ENCODE measurements at regions of chr12 and their contacts with region 1.

Region 1: DNA sequence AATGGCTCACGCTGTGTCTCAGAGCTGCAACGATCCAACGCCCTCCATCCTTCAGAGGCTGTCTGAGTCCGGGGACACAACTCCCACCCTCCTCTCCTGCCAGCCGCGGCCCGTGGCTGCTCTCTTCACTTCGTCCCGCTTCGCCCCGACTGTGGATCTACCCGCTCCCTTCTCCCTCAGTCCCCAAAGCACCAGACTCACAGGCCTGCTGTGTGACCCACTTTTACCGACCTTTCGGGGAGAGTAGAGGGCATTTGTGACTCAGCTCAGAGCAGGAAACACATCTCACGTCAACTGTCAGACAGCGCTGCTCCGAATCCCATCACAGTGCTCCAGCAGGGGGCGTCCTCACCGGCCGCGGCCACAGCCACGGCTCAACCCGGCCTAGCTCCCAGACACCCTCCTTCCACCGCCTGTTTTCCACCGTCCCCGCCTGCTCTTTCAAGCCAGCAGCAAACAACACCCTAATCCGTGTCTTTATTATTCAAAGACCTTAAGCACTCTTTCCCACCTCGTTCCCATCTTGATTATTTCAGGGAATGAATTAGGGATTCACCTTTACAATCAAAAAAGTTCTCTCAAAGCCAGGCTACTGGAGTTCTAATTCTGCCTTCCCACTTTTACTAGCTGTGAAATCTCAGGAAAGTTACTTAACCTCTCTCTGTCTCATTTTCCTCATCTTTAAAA is 5.0 kb upstream of the AQP2 start:
- DNase-seq: peak; percentile 93
- H3K4me3 Mint-ChIP-seq: peak overlapping the region; percentile 70
- H3K27ac Mint-ChIP-seq: peak overlapping the region; percentile 81
- H3K4me1 Mint-ChIP-seq: peaks cover 33% of the 10 kb centered on the region
- H3K27me3 Mint-ChIP-seq: no peaks in the 10 kb centered on the region

Region 2: DNA sequence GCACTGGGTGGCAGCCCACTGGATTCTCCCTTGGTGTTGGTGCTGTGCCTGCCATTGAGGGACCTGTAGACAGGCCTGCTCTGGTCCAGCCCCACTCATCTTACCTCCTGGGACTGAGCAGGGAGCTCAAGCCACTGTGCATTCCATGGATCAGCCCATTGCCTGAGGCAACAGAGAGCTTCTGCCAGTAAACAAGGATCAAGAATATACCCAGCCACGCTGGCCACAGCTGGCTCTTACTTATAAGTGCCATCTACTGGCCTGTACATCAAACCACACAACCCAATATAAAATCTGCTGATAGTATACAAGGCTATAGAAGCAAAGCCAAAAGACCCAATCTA is 335.8 kb before region 1 on chr12:
- CTCF ChIA-PET with region 1: no interaction called
- POLR2A ChIA-PET with region 1: no interaction called
- intact Hi-C with region 1: no loop called
- DNase-seq: no peak
- H3K4me3 Mint-ChIP-seq: no peak overlapping the region
- H3K27ac Mint-ChIP-seq: no peak overlapping the region
- H3K4me1 Mint-ChIP-seq: no peaks in the 10 kb centered on the region
- H3K27me3 Mint-ChIP-seq: peaks cover 2% of the 10 kb centered on the region

Region 3: DNA sequence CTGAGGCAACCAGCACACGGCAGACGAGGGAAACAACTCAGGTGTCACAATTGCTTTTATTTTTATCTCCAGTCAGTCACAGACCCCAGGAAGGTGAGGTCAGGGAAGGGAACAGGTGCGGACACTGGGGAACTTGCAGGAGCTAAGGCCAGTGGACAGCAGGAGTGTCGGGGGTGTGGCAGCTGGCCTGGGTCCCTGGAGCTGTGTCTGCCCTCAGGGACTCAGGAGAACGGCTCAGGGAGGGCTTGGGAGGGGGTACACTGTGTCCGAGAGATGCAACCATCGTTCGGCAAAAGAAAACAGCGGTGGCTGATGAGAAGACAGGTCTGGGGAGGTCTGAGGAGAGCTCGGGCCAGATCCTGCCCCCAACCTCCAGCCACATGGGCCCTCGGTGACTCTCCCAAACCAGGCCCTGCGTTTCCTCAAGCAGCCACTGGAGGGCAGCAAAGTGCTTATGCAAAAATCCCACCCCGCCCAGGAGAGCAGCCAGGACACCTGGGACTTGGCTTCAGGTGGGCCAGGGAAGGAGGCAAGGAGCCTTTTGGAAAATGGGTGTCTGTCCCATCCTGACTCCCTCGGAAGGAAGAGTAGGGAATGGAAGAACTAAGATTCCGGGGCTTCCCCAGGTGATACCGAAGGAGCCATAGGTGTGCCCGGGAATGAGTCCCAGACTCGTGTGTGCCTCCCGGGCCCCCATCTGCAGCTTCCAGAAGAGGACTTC is 78.5 kb before region 1 on chr12:
- CTCF ChIA-PET with region 1: interaction called, 30 read pairs
- POLR2A ChIA-PET with region 1: no interaction called
- intact Hi-C with region 1: loop called (anchors 5 kb)
- DNase-seq: peak; percentile 83
- H3K4me3 Mint-ChIP-seq: no peak overlapping the region
- H3K27ac Mint-ChIP-seq: no peak overlapping the region
- H3K4me1 Mint-ChIP-seq: no peaks in the 10 kb centered on the region
- H3K27me3 Mint-ChIP-seq: no peaks in the 10 kb centered on the region

Region 4: DNA sequence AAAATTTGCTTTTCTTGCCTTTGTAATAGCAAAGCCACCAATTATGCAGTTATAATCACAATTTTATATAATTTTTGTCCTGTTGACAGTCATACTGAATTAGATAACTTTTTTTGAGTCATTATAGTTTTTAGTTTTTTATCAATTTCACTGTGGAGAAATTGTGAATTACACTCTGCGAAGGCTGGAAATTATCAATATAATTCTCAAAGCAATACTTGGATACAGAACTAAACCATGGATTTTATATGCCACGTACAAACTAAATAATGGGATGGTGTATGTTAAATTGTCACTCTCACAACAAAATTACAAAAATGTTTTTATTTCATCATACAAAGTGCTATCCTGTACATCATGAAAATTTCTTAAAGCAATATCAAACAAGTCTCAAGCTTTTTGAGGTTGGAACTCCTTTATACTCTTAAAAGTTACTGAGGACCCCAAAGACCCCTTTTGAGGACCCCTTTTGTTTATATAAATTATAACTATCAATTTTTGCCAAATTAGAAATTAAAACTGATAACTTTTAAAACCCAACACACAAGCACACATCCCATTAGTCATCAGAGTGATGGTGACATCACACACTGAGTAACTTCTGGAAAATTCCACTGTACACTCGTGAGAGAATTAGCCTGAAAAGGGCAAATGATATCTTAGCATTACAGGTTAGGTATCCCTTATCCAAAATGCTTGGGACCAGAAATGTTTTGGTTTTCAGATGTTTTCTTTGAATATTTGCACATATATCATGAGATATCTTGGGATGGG is 14.8 kb before region 1 on chr12:
- CTCF ChIA-PET with region 1: interaction called, 25 read pairs
- POLR2A ChIA-PET with region 1: interaction called, 3 read pairs
- intact Hi-C with region 1: no loop called
- DNase-seq: no peak
- H3K4me3 Mint-ChIP-seq: no peak overlapping the region
- H3K27ac Mint-ChIP-seq: no peak overlapping the region
- H3K4me1 Mint-ChIP-seq: no peaks in the 10 kb centered on the region
- H3K27me3 Mint-ChIP-seq: peaks cover 6% of the 10 kb centered on the region

Region 5: GRCh38 chr12:50038336-50038735 is 92.8 kb after region 1 on chr12:
- CTCF ChIA-PET with region 1: interaction called, 13 read pairs
- POLR2A ChIA-PET with region 1: no interaction called
- intact Hi-C with region 1: no loop called
- DNase-seq: no peak
- H3K4me3 Mint-ChIP-seq: no peak overlapping the region
- H3K27ac Mint-ChIP-seq: no peak overlapping the region
- H3K4me1 Mint-ChIP-seq: peaks cover 12% of the 10 kb centered on the region
- H3K27me3 Mint-ChIP-seq: peaks cover 2% of the 10 kb centered on the region

Region 6: DNA sequence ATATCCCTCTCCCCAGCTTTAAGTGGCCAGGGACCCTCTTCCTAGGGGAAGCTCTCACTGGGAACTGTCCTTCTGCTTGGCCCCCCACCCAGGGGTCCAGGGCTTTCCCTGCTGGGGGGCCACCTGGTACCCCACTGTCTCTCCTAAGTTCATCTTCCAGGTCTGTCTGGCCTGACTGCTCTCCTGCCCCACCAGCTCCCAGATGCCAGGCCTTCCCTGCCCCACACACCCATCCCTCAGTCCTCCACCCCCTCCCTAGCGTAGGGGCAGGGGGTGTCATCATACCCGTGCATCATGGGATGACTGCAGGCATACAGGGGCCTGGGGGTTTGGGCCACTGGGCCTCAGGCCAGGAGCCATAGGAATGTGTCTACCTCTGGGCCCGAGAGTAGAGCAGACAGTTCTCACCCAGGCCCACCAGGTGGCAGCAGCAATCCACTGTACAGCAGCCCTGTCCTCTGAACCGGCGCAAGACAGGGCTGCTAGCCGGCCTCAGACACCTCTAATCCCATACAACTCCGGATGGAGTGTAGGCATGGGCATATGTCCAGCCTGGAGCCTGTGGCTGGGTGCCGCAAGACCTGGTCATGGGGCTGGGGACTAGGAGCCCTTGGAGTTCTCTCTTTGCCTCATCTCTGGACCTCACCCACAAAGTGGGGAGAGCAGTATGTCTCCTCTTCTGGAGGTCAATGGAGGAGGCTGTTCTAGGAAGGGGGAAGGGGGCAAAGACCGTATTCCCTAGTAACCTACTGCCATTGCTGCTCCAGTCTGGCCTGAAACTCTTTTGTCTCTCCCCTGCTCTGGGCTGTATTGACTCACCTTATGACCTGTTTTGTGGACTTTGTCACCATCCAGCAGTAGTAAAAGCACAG is 129.6 kb after region 1 on chr12:
- CTCF ChIA-PET with region 1: interaction called, 13 read pairs
- POLR2A ChIA-PET with region 1: no interaction called
- intact Hi-C with region 1: no loop called
- DNase-seq: peak; percentile 87
- H3K4me3 Mint-ChIP-seq: no peak overlapping the region
- H3K27ac Mint-ChIP-seq: no peak overlapping the region
- H3K4me1 Mint-ChIP-seq: peaks cover 7% of the 10 kb centered on the region
- H3K27me3 Mint-ChIP-seq: no peaks in the 10 kb centered on the region

Region 7: GRCh38 chr12:50734409-50735263 is 789.1 kb after region 1 on chr12:
- CTCF ChIA-PET with region 1: no interaction called
- POLR2A ChIA-PET with region 1: no interaction called
- intact Hi-C with region 1: no loop called
- DNase-seq: peak; percentile 13
- H3K4me3 Mint-ChIP-seq: no peak overlapping the region
- H3K27ac Mint-ChIP-seq: no peak overlapping the region
- H3K4me1 Mint-ChIP-seq: no peaks in the 10 kb centered on the region
- H3K27me3 Mint-ChIP-seq: no peaks in the 10 kb centered on the region

Measured in activated CD4-positive, alpha-beta memory T cell treated with anti-CD3 and anti-CD28 coated beads for 36 hours (primary cell).